PC-9 (cell line): ENCODE measurements at regions of chr5 and their contacts with region 1.

Region 1: DNA sequence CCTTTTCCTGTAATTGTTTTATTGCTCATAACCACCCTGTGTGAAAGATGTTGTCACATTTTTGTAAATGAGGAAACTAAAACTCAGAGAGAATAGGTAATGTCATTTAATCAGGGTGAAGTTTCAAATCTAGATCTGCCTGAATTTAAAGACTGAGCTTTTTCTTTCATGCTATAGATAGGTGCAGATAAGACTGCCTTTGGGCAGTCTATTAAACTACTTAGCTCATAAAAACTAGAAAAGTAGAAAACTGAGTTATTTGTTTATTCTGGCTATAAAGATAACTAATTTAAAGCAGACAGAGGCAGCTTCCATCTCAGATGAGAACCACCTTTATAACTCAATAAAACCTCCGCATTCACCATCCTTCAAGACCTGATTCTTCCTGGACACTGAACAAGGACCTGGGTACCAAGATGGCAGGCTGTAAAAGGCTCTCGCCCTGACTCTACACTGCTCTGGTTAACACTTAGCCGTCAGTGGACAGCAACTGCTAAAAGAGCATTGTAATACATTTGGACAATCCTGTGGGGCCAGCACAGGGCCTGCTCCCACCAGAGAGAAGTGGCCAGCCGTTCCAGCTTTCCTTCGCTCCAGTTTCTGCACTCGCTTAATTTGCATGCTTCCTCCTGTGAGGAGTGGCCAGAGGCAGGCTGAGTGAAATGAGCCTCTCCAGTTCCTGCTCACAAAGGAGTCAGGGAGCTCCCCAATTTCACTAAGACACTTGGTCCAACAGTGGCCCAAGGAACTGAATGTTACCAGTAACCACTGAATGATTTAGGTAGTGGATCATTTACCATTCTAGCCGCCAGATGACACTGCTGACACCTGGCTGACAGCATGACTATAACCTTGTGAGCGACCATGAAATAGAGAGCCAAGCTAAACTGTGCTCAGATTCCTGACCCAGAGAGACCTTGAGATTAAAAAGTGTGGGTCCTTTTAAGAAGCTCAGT is 566.4 kb downstream of the EFNA5 start:
- DNase-seq: peak in 1 of 2 experiments; percentile 2
- H3K4me3 ChIP-seq: no peak overlapping the region
- H3K27ac ChIP-seq: no peak overlapping the region
- H3K4me1 ChIP-seq: no peaks in the 10 kb centered on the region; the same call in 1 of the 2 replicates
- H3K27me3 ChIP-seq: no peaks in the 10 kb centered on the region
- CTCF ChIP-seq: peak; percentile 47

Region 2: GRCh38 chr5:107058239-107058638 is 46.1 kb before region 1 on chr5:
- CTCF ChIA-PET with region 1: no interaction called
- POLR2A ChIA-PET with region 1: no interaction called
- intact Hi-C with region 1: loop called (anchors 2 kb)
- DNase-seq: peak in 1 of 2 experiments; percentile 40
- H3K4me3 ChIP-seq: no peak overlapping the region
- H3K27ac ChIP-seq: no peak overlapping the region
- H3K4me1 ChIP-seq: no peaks in the 10 kb centered on the region; the same call in 1 of the 2 replicates
- H3K27me3 ChIP-seq: no peaks in the 10 kb centered on the region
- CTCF ChIP-seq: no peak

Region 3: GRCh38 chr5:107242411-107243219 is 138.3 kb after region 1 on chr5:
- CTCF ChIA-PET with region 1: no interaction called
- POLR2A ChIA-PET with region 1: no interaction called
- intact Hi-C with region 1: no loop called
- DNase-seq: no peak
- H3K4me3 ChIP-seq: no peak overlapping the region
- H3K27ac ChIP-seq: no peak overlapping the region
- H3K4me1 ChIP-seq: peaks cover 5% of the 10 kb centered on the region; the same call in 1 of the 2 replicates
- H3K27me3 ChIP-seq: no peaks in the 10 kb centered on the region
- CTCF ChIP-seq: no peak